ENCODE measurements at regions of chr6 and their contacts with region 1.

Region 1: GRCh38 chr6:593139-593906 is 63.6 kb downstream of the HUS1B start:
- DNase-seq: peak; percentile 44
- ATAC-seq: peak; percentile 65
- H3K4me3 ChIP-seq: no peak overlapping the region
- H3K27ac ChIP-seq: no peak overlapping the region
- H3K4me1 ChIP-seq: no peaks in the 10 kb centered on the region
- H3K27me3 ChIP-seq: no peaks in the 10 kb centered on the region
- CTCF ChIP-seq: peak; percentile 49 to 75 (median 63); a peak in 5 of 6 replicates
- POLR2A ChIP-seq: no peak
- RAD21 ChIP-seq: peak; percentile 80

Region 2: DNA sequence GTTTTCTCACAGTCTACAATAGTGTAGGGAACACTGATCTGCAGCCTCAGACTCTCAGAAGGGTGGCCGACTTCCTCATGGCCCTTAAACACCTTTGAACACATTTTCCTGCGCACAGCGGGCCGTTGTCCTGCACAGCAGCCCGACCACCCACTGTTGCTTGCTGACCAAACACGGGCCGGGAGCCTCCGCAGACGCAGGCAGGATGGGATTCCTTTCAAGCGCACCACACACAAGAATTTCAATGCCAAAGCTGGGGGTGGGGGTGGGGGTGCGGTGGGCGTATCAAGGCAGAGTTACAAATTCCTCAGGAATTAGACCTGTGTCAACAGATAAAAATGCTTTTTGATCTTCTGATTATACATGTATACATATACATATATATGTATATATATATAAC is 11.0 kb before region 1 on chr6:
- CTCF ChIA-PET with region 1: interaction called, 15 read pairs
- POLR2A ChIA-PET with region 1: no interaction called
- RAD21 ChIA-PET with region 1: no interaction called
- intact Hi-C with region 1: no loop called
- DNase-seq: no peak
- ATAC-seq: peak; percentile 63
- H3K4me3 ChIP-seq: no peak overlapping the region
- H3K27ac ChIP-seq: no peak overlapping the region
- H3K4me1 ChIP-seq: peaks cover 12 to 18% of the 10 kb centered on the region in 2 experiments
- H3K27me3 ChIP-seq: no peaks in the 10 kb centered on the region
- CTCF ChIP-seq: no peak
- POLR2A ChIP-seq: no peak
- RAD21 ChIP-seq: no peak

Region 3: DNA sequence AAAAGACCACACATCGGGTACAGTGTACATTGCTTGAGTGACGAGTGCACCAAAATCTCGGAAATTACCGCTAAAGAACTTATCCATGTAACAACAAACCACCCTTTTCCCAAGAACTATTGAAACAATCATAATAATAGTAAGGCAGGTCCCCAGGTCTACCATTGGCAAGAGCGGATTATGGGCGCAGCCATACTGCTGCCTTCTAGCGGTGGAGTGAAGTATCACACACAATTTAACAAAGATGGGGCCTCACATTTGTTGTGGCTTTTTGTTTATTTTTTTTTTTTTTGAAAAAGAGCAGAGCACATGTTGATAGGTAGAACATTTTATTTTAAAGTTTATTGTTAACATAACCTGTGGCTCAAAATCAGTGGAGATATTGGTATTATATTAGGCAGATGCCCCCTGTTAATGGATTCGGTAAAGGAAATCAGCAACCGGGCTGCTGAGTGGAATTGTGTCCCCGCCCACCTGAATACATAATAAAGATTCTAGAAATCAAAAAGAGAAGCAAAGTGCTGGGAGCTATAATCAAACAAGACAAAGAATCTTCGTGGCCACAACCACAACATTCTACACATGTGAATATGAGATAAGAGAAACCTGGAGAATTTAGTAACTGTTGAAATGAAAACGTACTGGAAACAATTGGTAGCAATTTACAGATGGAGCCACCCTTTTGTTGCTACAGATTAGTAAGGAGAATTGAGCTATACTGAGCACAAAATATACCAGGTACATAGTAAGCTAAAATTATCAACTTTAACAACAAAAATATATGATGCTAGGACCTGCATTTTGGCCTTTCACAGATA is 193.8 kb after region 1 on chr6:
- CTCF ChIA-PET with region 1: no interaction called
- POLR2A ChIA-PET with region 1: no interaction called
- RAD21 ChIA-PET with region 1: no interaction called
- intact Hi-C with region 1: loop called (anchors 1 kb)
- DNase-seq: peak; percentile 19
- ATAC-seq: peak; percentile 89
- H3K4me3 ChIP-seq: no peak overlapping the region
- H3K27ac ChIP-seq: no peak overlapping the region
- H3K4me1 ChIP-seq: no peaks in the 10 kb centered on the region
- H3K27me3 ChIP-seq: no peaks in the 10 kb centered on the region
- CTCF ChIP-seq: peak; percentile 64 to 88 (median 75); a peak in 5 of 6 replicates
- POLR2A ChIP-seq: no peak
- RAD21 ChIP-seq: peak; percentile 50

Region 4: GRCh38 chr6:1381481-1382330 is 788.4 kb after region 1 on chr6:
- CTCF ChIA-PET with region 1: interaction called, 3 read pairs
- POLR2A ChIA-PET with region 1: no interaction called
- RAD21 ChIA-PET with region 1: no interaction called
- intact Hi-C with region 1: loop called (anchors 1 kb)
- DNase-seq: no peak
- ATAC-seq: peak; percentile 95
- H3K4me3 ChIP-seq: peak overlapping the region in 1 of 2 experiments; percentile 26; a peak in 1 of 4 replicates
- H3K27ac ChIP-seq: no peak overlapping the region
- H3K4me1 ChIP-seq: peaks cover 0 to 8% of the 10 kb centered on the region in 2 experiments; a peak in 1 of 4 replicates
- H3K27me3 ChIP-seq: no peaks in the 10 kb centered on the region
- CTCF ChIP-seq: peak; percentile 44 to 69 (median 68); a peak in 4 of 6 replicates
- POLR2A ChIP-seq: no peak
- RAD21 ChIP-seq: peak; percentile 76

Region 5: GRCh38 chr6:1436334-1437306 is 843.3 kb after region 1 on chr6:
- CTCF ChIA-PET with region 1: interaction called, 9 read pairs
- POLR2A ChIA-PET with region 1: no interaction called
- RAD21 ChIA-PET with region 1: no interaction called
- intact Hi-C with region 1: loop called (anchors 1 kb)
- DNase-seq: peak; percentile 57
- ATAC-seq: peak; percentile 97
- H3K4me3 ChIP-seq: no peak overlapping the region
- H3K27ac ChIP-seq: no peak overlapping the region
- H3K4me1 ChIP-seq: peaks cover 0 to 5% of the 10 kb centered on the region in 2 experiments; a peak in 2 of 4 replicates
- H3K27me3 ChIP-seq: peaks cover 5% of the 10 kb centered on the region; the same call in 1 of the 2 replicates
- CTCF ChIP-seq: peak; percentile 61 to 84 (median 72)
- POLR2A ChIP-seq: no peak
- RAD21 ChIP-seq: peak; percentile 81

Measured in HCT116 (cell line).